ENCODE measurements at regions of chr18 and their contacts with region 1.

Region 1: GRCh38 chr18:7946734-7947377 is 379.7 kb downstream of the PTPRM start:
- DNase-seq: peak in 4 of 5 donors; percentile 33 to 57 (median 50)
- H3K4me3 ChIP-seq: peak overlapping the region; percentile 22 to 24
- H3K4me3 Mint-ChIP-seq: peak overlapping the region; percentile 56 to 88 (median 82)
- H3K27ac ChIP-seq: peak overlapping the region; percentile 27
- H3K27ac Mint-ChIP-seq: peak overlapping the region; percentile 20 to 95 (median 79)
- H3K4me1 ChIP-seq: peaks cover 9% of the 10 kb centered on the region
- H3K4me1 Mint-ChIP-seq: peaks cover 11 to 20% (median 15%) of the 10 kb centered on the region in 4 donors
- H3K27me3 ChIP-seq: no peaks in the 10 kb centered on the region
- H3K27me3 Mint-ChIP-seq: no peaks in the 10 kb centered on the region

Region 2: DNA sequence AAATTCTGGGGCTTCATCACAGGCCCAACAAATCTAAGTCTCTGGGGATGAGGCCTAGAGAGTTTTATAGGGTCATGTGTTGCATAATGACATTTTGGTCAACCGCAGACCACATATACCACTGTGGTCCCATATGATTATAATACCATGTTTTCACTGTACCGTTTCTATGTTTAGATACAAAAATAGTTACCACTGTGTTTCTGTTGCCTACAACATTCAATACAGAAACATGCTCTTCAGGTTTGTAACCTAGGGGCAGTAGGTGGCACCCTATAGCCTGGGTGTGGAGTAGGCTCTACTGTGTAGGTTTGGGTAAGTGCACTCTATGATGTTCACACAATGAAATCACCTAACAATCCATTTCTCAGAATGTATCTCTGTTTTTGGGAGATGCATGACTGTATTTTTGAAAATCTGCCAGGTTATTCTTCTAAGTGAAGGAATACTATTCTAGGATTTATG is 105.4 kb after region 1 on chr18:
- CTCF ChIA-PET with region 1: no interaction called
- POLR2A ChIA-PET with region 1: no interaction called
- intact Hi-C with region 1: loop called (anchors 10 kb)
- DNase-seq: peak; percentile 38 to 69 (median 48)
- H3K4me3 ChIP-seq: no peak overlapping the region
- H3K4me3 Mint-ChIP-seq: peak overlapping the region in 2 of 8 donors; percentile 9
- H3K27ac ChIP-seq: no peak overlapping the region
- H3K27ac Mint-ChIP-seq: peak overlapping the region in 6 of 7 donors; percentile 10 to 95 (median 80)
- H3K4me1 ChIP-seq: no peaks in the 10 kb centered on the region
- H3K4me1 Mint-ChIP-seq: peaks cover 13 to 30% (median 26%) of the 10 kb centered on the region in 4 donors
- H3K27me3 ChIP-seq: no peaks in the 10 kb centered on the region
- H3K27me3 Mint-ChIP-seq: no peaks in the 10 kb centered on the region